HepG2 (cell line): ENCODE measurements at regions of chr18 and their contacts with region 1.

Region 1: GRCh38 chr18:69216321-69216720 is 184.4 kb upstream of the DOK6 start:
- DNase-seq: no peak
- ATAC-seq: no peak
- H3K4me3 ChIP-seq: no peak overlapping the region
- H3K27ac ChIP-seq: no peak overlapping the region
- H3K4me1 ChIP-seq: no peaks in the 10 kb centered on the region
- H3K27me3 ChIP-seq: no peaks in the 10 kb centered on the region
- CTCF ChIP-seq: no peak
- EP300 ChIP-seq: no peak
- POLR2A ChIP-seq: no peak
- RAD21 ChIP-seq: no peak

Region 2: DNA sequence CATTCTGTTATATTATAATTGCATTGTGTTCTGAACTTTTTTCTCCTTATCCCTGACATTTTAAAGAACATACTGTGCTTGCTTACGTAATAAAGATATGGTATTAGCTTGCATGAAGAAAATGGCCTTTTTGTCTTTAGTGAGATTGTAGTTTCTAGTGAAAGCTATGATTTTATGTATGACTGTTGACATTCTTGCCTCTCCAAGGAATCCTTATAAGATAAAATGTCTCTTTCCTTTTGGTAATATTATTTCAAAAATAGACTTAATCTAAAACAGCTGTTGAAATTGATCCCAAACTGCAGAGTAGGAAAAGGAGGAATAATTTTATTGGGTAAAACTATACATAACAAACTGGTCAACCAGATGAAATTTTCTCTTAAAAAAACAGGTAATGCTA is 459.2 kb before region 1 on chr18:
- CTCF ChIA-PET with region 1: no interaction called
- POLR2A ChIA-PET with region 1: no interaction called
- in situ Hi-C with region 1: no loop called
- intact Hi-C with region 1: loop called (anchors 5 kb)
- DNase-seq: no peak
- ATAC-seq: no peak
- H3K4me3 ChIP-seq: no peak overlapping the region
- H3K27ac ChIP-seq: no peak overlapping the region
- H3K4me1 ChIP-seq: no peaks in the 10 kb centered on the region
- H3K27me3 ChIP-seq: no peaks in the 10 kb centered on the region
- CTCF ChIP-seq: no peak
- EP300 ChIP-seq: no peak
- POLR2A ChIP-seq: no peak
- RAD21 ChIP-seq: no peak

Region 3: DNA sequence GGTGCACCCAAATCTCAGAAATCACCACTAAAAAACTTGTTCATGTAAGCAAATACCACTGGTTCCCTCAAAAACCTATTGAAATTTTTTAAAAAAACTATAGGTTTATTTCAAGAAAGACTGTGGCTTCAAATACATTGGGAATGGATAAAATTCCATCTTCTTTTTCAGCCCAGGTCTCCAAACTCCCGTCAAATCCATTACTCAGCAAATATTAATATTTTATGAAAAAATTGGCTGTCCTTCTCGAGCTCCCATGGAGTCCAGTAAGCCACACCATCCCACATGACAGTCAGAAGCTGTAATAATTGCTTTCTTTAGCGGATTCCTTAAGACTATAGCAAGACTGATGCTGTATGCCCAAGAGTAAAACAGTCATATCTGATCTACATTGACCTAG is 20.0 kb before region 1 on chr18:
- CTCF ChIA-PET with region 1: no interaction called
- POLR2A ChIA-PET with region 1: no interaction called
- in situ Hi-C with region 1: no loop called
- intact Hi-C with region 1: no loop called
- DNase-seq: no peak
- ATAC-seq: no peak
- H3K4me3 ChIP-seq: no peak overlapping the region
- H3K27ac ChIP-seq: no peak overlapping the region
- H3K4me1 ChIP-seq: no peaks in the 10 kb centered on the region
- H3K27me3 ChIP-seq: no peaks in the 10 kb centered on the region
- CTCF ChIP-seq: no peak
- EP300 ChIP-seq: no peak
- POLR2A ChIP-seq: no peak
- RAD21 ChIP-seq: no peak

Region 4: GRCh38 chr18:69330370-69331005 is 114.2 kb after region 1 on chr18:
- CTCF ChIA-PET with region 1: no interaction called
- POLR2A ChIA-PET with region 1: no interaction called
- in situ Hi-C with region 1: no loop called
- intact Hi-C with region 1: no loop called
- DNase-seq: peak; percentile 27
- ATAC-seq: peak; percentile 94
- H3K4me3 ChIP-seq: peak overlapping the region in 1 of 3 experiments; percentile 14; a peak in 1 of 6 replicates
- H3K27ac ChIP-seq: no peak overlapping the region
- H3K4me1 ChIP-seq: peaks cover 13% of the 10 kb centered on the region
- H3K27me3 ChIP-seq: no peaks in the 10 kb centered on the region
- CTCF ChIP-seq: no peak
- EP300 ChIP-seq: no peak
- POLR2A ChIP-seq: no peak
- RAD21 ChIP-seq: no peak

Region 5: DNA sequence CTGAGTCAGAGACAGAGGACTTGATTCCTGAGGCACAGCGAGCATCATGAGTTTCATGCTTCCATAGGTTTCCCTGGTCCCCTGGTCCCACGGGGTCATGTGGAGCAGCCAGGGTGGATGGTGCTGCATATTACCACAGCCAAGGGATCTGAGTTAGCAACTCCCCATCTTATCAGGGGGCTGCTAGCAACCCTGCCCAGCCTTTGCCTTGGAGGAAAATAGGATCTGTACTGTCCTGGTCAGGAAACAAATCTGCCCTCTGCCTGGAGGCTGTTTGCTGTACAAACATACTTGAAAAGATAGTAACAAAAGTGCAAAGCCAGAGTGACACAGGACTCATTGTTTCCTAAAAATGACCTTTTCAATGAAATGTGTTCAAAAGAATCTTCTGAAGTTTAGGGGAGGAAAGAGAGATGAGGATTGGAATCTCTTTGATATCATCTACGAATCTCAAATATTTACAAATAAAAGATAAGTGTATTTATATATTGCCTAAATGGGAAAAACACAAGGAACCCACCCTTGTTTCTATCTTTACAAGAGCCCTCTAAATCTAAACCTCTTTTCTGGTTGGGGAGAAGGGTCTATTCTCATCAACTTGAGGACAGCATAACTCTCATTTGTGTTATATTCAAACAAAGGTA is 536.5 kb after region 1 on chr18:
- CTCF ChIA-PET with region 1: no interaction called
- POLR2A ChIA-PET with region 1: no interaction called
- in situ Hi-C with region 1: no loop called
- intact Hi-C with region 1: no loop called
- DNase-seq: peak; percentile 99
- ATAC-seq: peak; percentile 99
- H3K4me3 ChIP-seq: peak overlapping the region in 1 of 3 experiments; percentile 25; a peak in 1 of 6 replicates
- H3K27ac ChIP-seq: peak overlapping the region; percentile 92
- H3K4me1 ChIP-seq: peaks cover 77% of the 10 kb centered on the region
- H3K27me3 ChIP-seq: no peaks in the 10 kb centered on the region
- CTCF ChIP-seq: no peak
- EP300 ChIP-seq: peak; percentile 76 to 97; a peak in 3 of 4 replicates
- POLR2A ChIP-seq: no peak
- RAD21 ChIP-seq: peak; percentile 46; the same call in 1 of the 2 replicates